ENCODE measurements at regions of chr1 and their contacts with region 1.

Region 1: DNA sequence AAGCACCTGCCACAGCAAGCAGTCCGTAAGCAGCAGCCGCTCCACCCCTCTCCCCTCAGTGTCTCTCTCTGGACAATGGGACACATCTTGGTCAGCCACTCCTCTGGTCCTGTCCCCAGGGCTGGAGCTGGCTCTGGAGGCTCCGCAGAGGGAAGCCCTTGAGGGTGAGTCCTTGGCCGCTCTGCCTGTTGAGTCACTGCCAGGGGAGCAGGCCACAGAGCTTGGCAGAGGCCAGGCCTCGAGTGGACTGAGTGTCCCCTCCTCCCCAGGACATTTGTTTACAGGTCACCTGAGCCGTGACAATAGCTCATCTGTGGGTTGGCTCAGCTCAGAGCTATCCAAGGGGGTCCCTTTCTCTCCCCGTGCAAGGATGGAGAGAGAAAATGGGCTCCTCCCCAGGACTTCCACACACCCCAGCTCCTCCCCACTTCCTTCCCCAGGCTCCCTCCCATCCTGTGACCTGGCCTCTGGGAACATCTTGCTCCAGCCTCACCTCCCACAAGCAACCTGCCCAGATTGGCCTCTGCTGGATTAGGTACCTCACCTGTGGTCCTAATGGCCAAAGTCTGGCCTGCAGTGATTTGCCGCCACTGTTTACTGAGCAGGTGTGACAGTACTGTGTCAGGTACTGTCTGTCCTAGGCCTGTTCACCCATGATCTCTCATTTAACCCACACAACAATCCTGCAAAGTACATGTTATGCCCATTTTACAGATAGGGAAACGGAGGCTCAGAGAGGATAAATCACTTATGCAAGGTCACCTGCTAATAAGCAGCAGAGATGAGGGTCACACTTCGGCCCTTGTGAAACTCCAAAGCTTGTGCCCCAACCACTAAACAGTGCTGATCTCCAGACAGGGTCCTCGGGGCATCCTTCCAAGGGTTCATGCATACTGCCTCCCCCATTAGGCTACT is 4.8 kb downstream of the FAM131C start:
- DNase-seq: no peak
- ATAC-seq: no peak
- H3K4me3 Mint-ChIP-seq: no peak overlapping the region
- H3K27ac Mint-ChIP-seq: peak overlapping the region; percentile 42
- H3K4me1 Mint-ChIP-seq: peaks cover 57% of the 10 kb centered on the region
- H3K27me3 Mint-ChIP-seq: peaks cover 17% of the 10 kb centered on the region

Region 2: DNA sequence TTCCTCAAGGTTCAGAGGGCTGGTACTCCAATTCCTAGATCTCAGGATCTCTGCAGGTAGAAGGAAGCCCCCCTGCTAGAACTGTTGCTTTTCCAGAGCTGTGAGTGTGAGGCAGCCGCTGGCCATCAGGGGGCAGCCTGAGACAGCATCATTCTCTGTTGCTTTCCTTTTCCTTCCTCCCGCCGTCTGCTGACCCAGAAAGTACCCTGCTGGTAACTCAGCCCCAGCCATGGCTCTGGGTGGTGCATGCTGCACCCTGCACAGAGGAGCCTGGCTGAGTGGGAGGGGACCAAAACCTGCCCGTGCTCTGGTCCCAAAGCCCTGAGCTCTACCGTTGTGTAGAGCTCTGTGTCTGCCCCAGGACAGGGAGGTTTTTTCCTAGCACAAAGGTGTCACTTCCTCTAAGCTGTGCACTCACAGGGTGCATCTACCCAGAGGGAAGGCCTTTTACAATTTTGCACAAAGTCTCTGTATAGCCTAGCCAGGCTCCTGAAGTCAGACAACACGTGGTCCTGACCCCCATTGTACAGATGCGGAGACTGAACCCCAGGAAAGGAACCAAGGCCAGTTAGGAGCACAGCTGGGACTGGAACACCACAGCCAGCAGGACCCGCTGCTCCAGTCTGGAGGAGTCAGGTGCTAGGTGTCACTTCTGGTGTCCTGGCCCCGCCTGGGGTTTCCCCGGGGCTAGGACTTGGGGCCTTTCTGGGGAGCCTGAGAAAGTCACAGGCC is 10.5 kb after region 1 on chr1:
- POLR2A ChIA-PET with region 1: interaction called, 11 read pairs
- DNase-seq: peak; percentile 85
- ATAC-seq: peak; percentile 83
- H3K4me3 Mint-ChIP-seq: peak overlapping the region; percentile 80
- H3K27ac Mint-ChIP-seq: peak overlapping the region; percentile 93
- H3K4me1 Mint-ChIP-seq: peaks cover 12% of the 10 kb centered on the region
- H3K27me3 Mint-ChIP-seq: peaks cover 9% of the 10 kb centered on the region

Measured in activated naive CD8-positive, alpha-beta T cell treated with anti-CD3 and anti-CD28 coated beads, Interleukin-2, amount 10 ng/mL, durations not matched to agents 7 days and 5 days (primary cell).